SK-N-SH (cell line): ENCODE measurements at regions of chr2 and their contacts with region 1.

Region 1: GRCh38 chr2:210195101-210195852 is 24.1 kb upstream of the KANSL1L start:
- DNase-seq: peak; percentile 34
- H3K4me3 ChIP-seq: peak overlapping the region in 1 of 2 experiments; percentile 26; a peak in 1 of 4 replicates
- H3K27ac ChIP-seq: no peak overlapping the region
- H3K4me1 ChIP-seq: peaks cover 4 to 7% of the 10 kb centered on the region in 2 experiments; a peak in 3 of 4 replicates
- H3K27me3 ChIP-seq: no peaks in the 10 kb centered on the region
- CTCF ChIP-seq: peak; percentile 87
- EP300 ChIP-seq: no peak
- RAD21 ChIP-seq: peak; percentile 91

Region 2: GRCh38 chr2:209253544-209253943 is 941.7 kb before region 1 on chr2:
- CTCF ChIA-PET with region 1: no interaction called
- POLR2A ChIA-PET with region 1: no interaction called
- DNase-seq: no peak
- H3K4me3 ChIP-seq: no peak overlapping the region
- H3K27ac ChIP-seq: no peak overlapping the region
- H3K4me1 ChIP-seq: no peaks in the 10 kb centered on the region
- H3K27me3 ChIP-seq: no peaks in the 10 kb centered on the region
- CTCF ChIP-seq: no peak
- EP300 ChIP-seq: no peak
- RAD21 ChIP-seq: no peak

Region 3: GRCh38 chr2:209988010-209988409 is 207.3 kb before region 1 on chr2:
- CTCF ChIA-PET with region 1: interaction called, 11 read pairs
- POLR2A ChIA-PET with region 1: no interaction called
- DNase-seq: no peak
- H3K4me3 ChIP-seq: no peak overlapping the region
- H3K27ac ChIP-seq: no peak overlapping the region
- H3K4me1 ChIP-seq: no peaks in the 10 kb centered on the region
- H3K27me3 ChIP-seq: no peaks in the 10 kb centered on the region
- CTCF ChIP-seq: no peak
- EP300 ChIP-seq: no peak
- RAD21 ChIP-seq: no peak

Region 4: GRCh38 chr2:210177769-210178168 is 17.5 kb before region 1 on chr2:
- CTCF ChIA-PET with region 1: interaction called, 10 read pairs
- POLR2A ChIA-PET with region 1: no interaction called
- DNase-seq: no peak
- H3K4me3 ChIP-seq: no peak overlapping the region
- H3K27ac ChIP-seq: no peak overlapping the region
- H3K4me1 ChIP-seq: no peaks in the 10 kb centered on the region; a peak in 1 of 4 replicates
- H3K27me3 ChIP-seq: peaks cover 4% of the 10 kb centered on the region; the same call in 1 of the 2 replicates
- CTCF ChIP-seq: no peak
- EP300 ChIP-seq: no peak
- RAD21 ChIP-seq: no peak

Region 5: DNA sequence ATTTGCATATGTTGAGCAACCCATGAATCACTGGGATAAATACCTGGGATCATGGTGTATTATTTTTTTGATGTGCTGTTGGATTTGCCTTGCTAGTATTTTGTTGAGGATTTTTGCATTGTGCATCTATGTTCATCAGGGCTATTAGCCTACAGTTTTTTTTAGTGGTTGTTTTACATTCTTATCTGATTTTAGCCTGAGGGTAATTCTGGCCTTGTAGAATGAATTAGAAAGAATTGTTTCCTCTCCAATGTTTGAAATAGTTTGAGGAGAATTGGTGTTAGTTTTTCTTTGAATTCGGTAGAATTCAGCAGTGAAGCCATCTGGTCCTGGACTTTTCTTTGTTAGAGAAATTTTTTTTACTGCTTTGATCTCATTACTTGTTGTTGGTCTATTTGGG is 133.4 kb after region 1 on chr2:
- CTCF ChIA-PET with region 1: no interaction called
- POLR2A ChIA-PET with region 1: no interaction called
- DNase-seq: no peak
- H3K4me3 ChIP-seq: no peak overlapping the region
- H3K27ac ChIP-seq: no peak overlapping the region
- H3K4me1 ChIP-seq: no peaks in the 10 kb centered on the region
- H3K27me3 ChIP-seq: no peaks in the 10 kb centered on the region
- CTCF ChIP-seq: no peak
- EP300 ChIP-seq: no peak
- RAD21 ChIP-seq: no peak